Heart left ventricle (tissue), 16 donors: ENCODE measurements at regions of chr22 and their contacts with region 1.

Region 1: GRCh38 chr22:25143156-25144076 is 56.2 kb upstream of the CRYBB3 start:
- DNase-seq: no peak
- ATAC-seq: peak in 1 of 4 donors; percentile 29
- H3K4me3 ChIP-seq: no peak overlapping the region
- H3K27ac ChIP-seq: no peak overlapping the region
- H3K4me1 ChIP-seq: peaks cover 0 to 56% (median 25%) of the 10 kb centered on the region in 12 donors
- H3K27me3 ChIP-seq: no peaks in the 10 kb centered on the region
- CTCF ChIP-seq: no peak
- POLR2A ChIP-seq: no peak

Region 2: GRCh38 chr22:24744638-24745037 is 398.8 kb before region 1 on chr22:
- intact Hi-C with region 1: no loop called
- DNase-seq: no peak
- ATAC-seq: no peak
- H3K4me3 ChIP-seq: no peak overlapping the region
- H3K27ac ChIP-seq: no peak overlapping the region
- H3K4me1 ChIP-seq: no peaks in the 10 kb centered on the region
- H3K27me3 ChIP-seq: peaks cover 0 to 3% (median 0%) of the 10 kb centered on the region in 9 donors
- CTCF ChIP-seq: no peak
- POLR2A ChIP-seq: no peak

Region 3: GRCh38 chr22:25159028-25159427 is 15.6 kb after region 1 on chr22:
- intact Hi-C with region 1: loop called in 1 of 10 experiments (anchors 2 kb)
- DNase-seq: no peak
- ATAC-seq: peak in 1 of 4 donors; percentile 17
- H3K4me3 ChIP-seq: no peak overlapping the region
- H3K27ac ChIP-seq: no peak overlapping the region
- H3K4me1 ChIP-seq: peaks cover 0 to 40% (median 22%) of the 10 kb centered on the region in 12 donors
- H3K27me3 ChIP-seq: no peaks in the 10 kb centered on the region
- CTCF ChIP-seq: no peak
- POLR2A ChIP-seq: no peak